Panc1 (cell line): ENCODE measurements at regions of chr4 and their contacts with region 1.

Region 1: GRCh38 chr4:55609393-55609866 is 17.4 kb upstream of the PDCL2 start:
- DNase-seq: no peak
- ATAC-seq: no peak
- H3K4me3 ChIP-seq: no peak overlapping the region
- H3K27ac ChIP-seq: no peak overlapping the region
- H3K4me1 ChIP-seq: no peaks in the 10 kb centered on the region
- H3K27me3 ChIP-seq: no peaks in the 10 kb centered on the region
- CTCF ChIP-seq: no peak

Region 2: DNA sequence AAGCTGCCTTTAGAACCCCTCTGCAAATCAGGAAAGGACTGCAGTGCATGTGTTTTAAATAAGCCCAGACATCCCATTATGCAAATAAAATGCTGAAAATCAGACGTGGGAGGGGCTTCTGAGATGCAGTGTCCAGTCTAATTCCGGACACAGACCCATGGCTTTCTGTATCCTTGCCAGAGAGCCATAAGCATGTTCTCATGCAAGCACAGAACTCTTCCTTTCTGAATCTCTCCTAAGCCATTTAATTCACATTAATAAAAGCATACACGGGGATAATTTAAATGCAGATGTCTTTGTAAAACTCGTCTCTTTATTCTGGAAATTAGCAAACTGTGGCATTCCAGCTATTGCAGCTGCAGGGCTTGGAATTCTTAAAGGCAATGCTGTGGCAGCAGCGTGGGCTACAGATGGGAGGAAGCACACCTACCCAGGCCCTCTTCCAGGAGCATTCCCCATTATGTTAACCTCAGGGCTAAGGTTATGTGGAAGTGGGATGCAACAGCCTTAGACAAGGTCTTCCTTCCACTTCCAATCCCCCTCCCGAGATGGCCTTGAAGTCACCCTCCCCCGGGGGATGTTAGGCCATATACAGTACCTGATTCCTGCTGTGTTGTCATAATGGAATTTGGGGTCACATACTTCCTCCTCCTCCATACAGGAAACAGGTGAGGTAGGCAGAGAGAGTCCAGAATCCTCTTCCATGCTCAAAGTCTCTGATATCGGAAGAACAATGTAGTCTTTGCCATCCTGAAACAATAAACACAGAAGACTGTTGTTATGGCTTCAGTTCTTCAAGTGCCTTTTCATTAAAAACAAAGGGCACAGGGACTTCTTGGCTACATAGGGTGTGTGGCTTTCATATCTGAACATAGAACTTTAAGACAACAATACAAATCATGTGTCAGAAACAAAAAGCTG is 522.2 kb before region 1 on chr4:
- CTCF ChIA-PET with region 1: no interaction called
- POLR2A ChIA-PET with region 1: no interaction called
- in situ Hi-C with region 1: no loop called
- intact Hi-C with region 1: no loop called
- DNase-seq: no peak
- ATAC-seq: no peak
- H3K4me3 ChIP-seq: no peak overlapping the region
- H3K27ac ChIP-seq: no peak overlapping the region
- H3K4me1 ChIP-seq: no peaks in the 10 kb centered on the region
- H3K27me3 ChIP-seq: no peaks in the 10 kb centered on the region
- CTCF ChIP-seq: no peak

Region 3: DNA sequence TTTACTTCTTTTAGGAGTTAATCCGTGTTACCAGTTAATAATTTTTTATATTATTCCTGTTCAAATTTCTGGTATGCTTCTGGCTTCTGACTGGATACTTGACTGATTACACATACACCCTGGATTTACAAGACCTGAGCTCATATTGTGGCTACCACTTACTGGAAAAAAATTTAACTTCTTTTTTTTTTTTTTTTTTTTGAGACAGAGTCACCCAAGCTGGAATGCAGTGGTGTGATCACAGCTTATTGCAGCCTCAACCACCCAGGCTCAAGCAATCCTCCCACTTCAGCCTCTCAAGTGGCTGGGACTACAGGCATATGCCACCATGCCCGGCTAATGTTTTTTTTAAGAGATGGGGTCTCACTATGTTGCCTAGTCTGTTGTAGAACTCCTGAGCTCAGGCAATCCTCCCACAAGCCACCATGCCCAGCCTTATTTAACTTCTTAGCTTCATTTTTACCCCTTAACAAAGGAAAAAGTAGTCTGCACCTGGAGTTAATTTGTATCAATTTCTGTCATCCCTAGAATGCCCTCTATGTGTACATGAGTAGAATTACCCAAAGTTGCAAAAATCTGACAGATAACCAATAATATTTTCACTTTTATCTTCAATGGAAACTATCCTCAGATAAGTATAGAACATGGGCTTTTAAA is 163.4 kb before region 1 on chr4:
- CTCF ChIA-PET with region 1: no interaction called
- POLR2A ChIA-PET with region 1: no interaction called
- in situ Hi-C with region 1: no loop called
- intact Hi-C with region 1: no loop called
- DNase-seq: no peak
- ATAC-seq: no peak
- H3K4me3 ChIP-seq: no peak overlapping the region
- H3K27ac ChIP-seq: no peak overlapping the region
- H3K4me1 ChIP-seq: no peaks in the 10 kb centered on the region
- H3K27me3 ChIP-seq: no peaks in the 10 kb centered on the region
- CTCF ChIP-seq: no peak

Region 4: DNA sequence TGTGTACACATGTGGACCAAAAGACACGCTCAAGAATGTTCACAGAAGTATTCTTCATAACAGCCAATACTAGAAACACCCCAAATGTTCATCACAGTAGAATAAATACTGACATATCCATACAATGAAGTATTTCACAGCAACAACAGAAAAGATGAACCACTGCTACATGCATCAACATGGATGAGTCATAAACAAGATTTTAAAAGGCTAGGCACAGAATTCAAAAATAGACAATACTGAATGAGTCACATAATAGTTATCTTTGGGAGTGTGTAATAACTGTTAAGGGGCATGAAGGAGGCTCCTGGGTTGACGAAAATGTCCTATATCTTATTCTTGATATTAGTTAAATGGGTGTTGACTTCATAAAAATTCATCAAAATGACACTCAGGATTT is 106.3 kb before region 1 on chr4:
- CTCF ChIA-PET with region 1: no interaction called
- POLR2A ChIA-PET with region 1: no interaction called
- in situ Hi-C with region 1: no loop called
- intact Hi-C with region 1: no loop called
- DNase-seq: no peak
- ATAC-seq: no peak
- H3K4me3 ChIP-seq: no peak overlapping the region
- H3K27ac ChIP-seq: no peak overlapping the region
- H3K4me1 ChIP-seq: no peaks in the 10 kb centered on the region
- H3K27me3 ChIP-seq: no peaks in the 10 kb centered on the region
- CTCF ChIP-seq: no peak

Region 5: DNA sequence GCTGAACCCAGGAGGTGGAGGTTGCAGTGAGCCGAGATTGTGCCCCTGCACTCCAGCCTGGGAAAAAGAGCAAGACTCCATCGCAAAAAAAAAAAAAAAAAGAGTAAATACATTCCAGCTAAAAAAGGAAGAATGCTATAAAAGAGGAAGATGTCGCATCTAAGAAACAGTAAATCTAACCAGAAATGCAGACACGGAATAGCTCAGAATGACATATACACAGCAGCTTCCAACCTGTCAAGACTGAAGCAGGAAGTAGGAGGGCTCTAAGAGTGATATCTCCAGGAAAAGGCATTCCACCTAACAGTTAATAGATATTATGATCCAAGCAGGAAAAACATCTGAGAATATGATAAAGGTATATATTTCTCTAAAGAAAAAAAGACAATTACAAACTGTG is 78.7 kb before region 1 on chr4:
- CTCF ChIA-PET with region 1: no interaction called
- POLR2A ChIA-PET with region 1: no interaction called
- in situ Hi-C with region 1: no loop called
- intact Hi-C with region 1: no loop called
- DNase-seq: no peak
- ATAC-seq: no peak
- H3K4me3 ChIP-seq: no peak overlapping the region
- H3K27ac ChIP-seq: no peak overlapping the region
- H3K4me1 ChIP-seq: no peaks in the 10 kb centered on the region
- H3K27me3 ChIP-seq: no peaks in the 10 kb centered on the region
- CTCF ChIP-seq: no peak

Region 6: GRCh38 chr4:55578341-55579010 is 31.0 kb before region 1 on chr4:
- CTCF ChIA-PET with region 1: no interaction called
- POLR2A ChIA-PET with region 1: interaction called, 10 read pairs
- in situ Hi-C with region 1: no loop called
- intact Hi-C with region 1: no loop called
- DNase-seq: no peak
- ATAC-seq: no peak
- H3K4me3 ChIP-seq: no peak overlapping the region
- H3K27ac ChIP-seq: no peak overlapping the region
- H3K4me1 ChIP-seq: no peaks in the 10 kb centered on the region
- H3K27me3 ChIP-seq: no peaks in the 10 kb centered on the region
- CTCF ChIP-seq: no peak